ENCODE measurements at regions of chr7 and their contacts with region 1.

Region 1: GRCh38 chr7:133784486-133785001 is 342.6 kb upstream of the LRGUK start:
- DNase-seq: no peak
- ATAC-seq: no peak
- H3K4me3 ChIP-seq: no peak overlapping the region
- H3K4me3 Mint-ChIP-seq: no peak overlapping the region
- H3K27ac ChIP-seq: no peak overlapping the region
- H3K27ac Mint-ChIP-seq: no peak overlapping the region
- H3K4me1 ChIP-seq: no peaks in the 10 kb centered on the region
- H3K4me1 Mint-ChIP-seq: no peaks in the 10 kb centered on the region
- H3K27me3 ChIP-seq: no peaks in the 10 kb centered on the region
- H3K27me3 Mint-ChIP-seq: no peaks in the 10 kb centered on the region
- CTCF ChIP-seq: no peak

Region 2: DNA sequence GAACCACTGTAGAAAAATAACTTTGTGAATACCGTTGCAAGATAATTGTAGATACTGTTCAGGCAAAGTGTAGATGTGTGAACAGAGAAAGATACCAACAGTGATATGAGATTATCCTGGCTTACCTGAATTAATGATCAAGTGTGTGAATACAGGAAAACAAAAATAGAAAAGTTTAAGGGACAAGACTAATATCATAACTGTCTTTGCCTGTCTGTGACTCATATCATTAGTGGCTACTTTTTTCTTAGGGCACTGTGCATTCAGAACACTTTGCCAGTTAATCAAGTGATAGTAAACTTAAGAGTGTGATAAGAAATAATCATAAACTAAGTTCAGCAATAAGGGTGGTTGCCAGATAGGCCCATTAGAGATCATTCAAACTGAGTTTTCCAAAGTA is 19.6 kb after region 1 on chr7:
- CTCF ChIA-PET with region 1: no interaction called
- POLR2A ChIA-PET with region 1: no interaction called
- intact Hi-C with region 1: no loop called
- DNase-seq: no peak
- ATAC-seq: no peak
- H3K4me3 ChIP-seq: no peak overlapping the region
- H3K4me3 Mint-ChIP-seq: no peak overlapping the region
- H3K27ac ChIP-seq: no peak overlapping the region
- H3K27ac Mint-ChIP-seq: no peak overlapping the region
- H3K4me1 ChIP-seq: no peaks in the 10 kb centered on the region
- H3K4me1 Mint-ChIP-seq: no peaks in the 10 kb centered on the region
- H3K27me3 ChIP-seq: no peaks in the 10 kb centered on the region
- H3K27me3 Mint-ChIP-seq: no peaks in the 10 kb centered on the region
- CTCF ChIP-seq: no peak

Region 3: GRCh38 chr7:133815611-133816210 is 31.2 kb after region 1 on chr7:
- CTCF ChIA-PET with region 1: no interaction called
- POLR2A ChIA-PET with region 1: no interaction called
- intact Hi-C with region 1: loop called in 1 of 2 experiments (anchors 1 kb)
- DNase-seq: no peak
- ATAC-seq: no peak
- H3K4me3 ChIP-seq: no peak overlapping the region
- H3K4me3 Mint-ChIP-seq: no peak overlapping the region
- H3K27ac ChIP-seq: no peak overlapping the region
- H3K27ac Mint-ChIP-seq: no peak overlapping the region
- H3K4me1 ChIP-seq: no peaks in the 10 kb centered on the region
- H3K4me1 Mint-ChIP-seq: no peaks in the 10 kb centered on the region
- H3K27me3 ChIP-seq: no peaks in the 10 kb centered on the region
- H3K27me3 Mint-ChIP-seq: no peaks in the 10 kb centered on the region
- CTCF ChIP-seq: no peak

Region 4: GRCh38 chr7:133824132-133824531 is 39.6 kb after region 1 on chr7:
- CTCF ChIA-PET with region 1: no interaction called
- POLR2A ChIA-PET with region 1: no interaction called
- intact Hi-C with region 1: loop called in 1 of 2 experiments (anchors 1 kb)
- DNase-seq: peak in 1 of 9 experiments; percentile 14
- ATAC-seq: no peak
- H3K4me3 ChIP-seq: no peak overlapping the region
- H3K4me3 Mint-ChIP-seq: no peak overlapping the region
- H3K27ac ChIP-seq: no peak overlapping the region
- H3K27ac Mint-ChIP-seq: peak overlapping the region; percentile 30
- H3K4me1 ChIP-seq: no peaks in the 10 kb centered on the region
- H3K4me1 Mint-ChIP-seq: peaks cover 5% of the 10 kb centered on the region
- H3K27me3 ChIP-seq: no peaks in the 10 kb centered on the region
- H3K27me3 Mint-ChIP-seq: no peaks in the 10 kb centered on the region
- CTCF ChIP-seq: no peak

Region 5: DNA sequence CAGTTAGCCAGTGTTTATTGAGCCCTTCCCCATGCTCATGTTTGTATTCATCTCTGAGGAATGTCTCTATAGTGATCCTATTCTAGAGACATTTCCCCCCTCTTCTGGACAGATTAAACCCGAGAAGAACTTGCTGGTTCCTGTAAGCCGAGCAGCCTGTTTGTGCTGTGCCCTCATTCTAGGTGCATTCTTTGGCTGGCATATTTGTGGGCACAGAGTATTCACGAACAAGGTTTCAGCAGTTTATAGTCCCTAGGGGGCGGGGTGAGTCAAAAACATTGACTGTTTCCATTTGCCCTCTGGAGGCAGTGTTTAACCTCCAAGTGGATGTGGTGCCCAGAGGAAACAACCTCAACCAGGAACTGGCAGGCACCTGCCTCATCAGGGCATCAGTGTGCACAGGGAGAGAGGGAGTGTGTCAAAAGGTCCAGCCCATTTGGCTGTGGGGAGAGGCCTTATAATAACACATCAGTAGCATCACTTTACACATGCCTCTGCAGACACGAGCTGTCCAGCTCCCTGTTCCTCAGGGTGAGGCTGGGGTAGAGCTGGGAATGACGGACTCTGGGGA is 69.2 kb after region 1 on chr7:
- CTCF ChIA-PET with region 1: no interaction called
- POLR2A ChIA-PET with region 1: no interaction called
- intact Hi-C with region 1: no loop called
- DNase-seq: peak in 2 of 9 experiments; percentile 12 to 28
- ATAC-seq: no peak
- H3K4me3 ChIP-seq: no peak overlapping the region
- H3K4me3 Mint-ChIP-seq: no peak overlapping the region
- H3K27ac ChIP-seq: no peak overlapping the region
- H3K27ac Mint-ChIP-seq: no peak overlapping the region
- H3K4me1 ChIP-seq: no peaks in the 10 kb centered on the region
- H3K4me1 Mint-ChIP-seq: no peaks in the 10 kb centered on the region
- H3K27me3 ChIP-seq: no peaks in the 10 kb centered on the region
- H3K27me3 Mint-ChIP-seq: no peaks in the 10 kb centered on the region
- CTCF ChIP-seq: no peak

Measured in CD8-positive, alpha-beta T cell (primary cell).